ENCODE measurements at regions of chr1 and their contacts with region 1.

Region 1: DNA sequence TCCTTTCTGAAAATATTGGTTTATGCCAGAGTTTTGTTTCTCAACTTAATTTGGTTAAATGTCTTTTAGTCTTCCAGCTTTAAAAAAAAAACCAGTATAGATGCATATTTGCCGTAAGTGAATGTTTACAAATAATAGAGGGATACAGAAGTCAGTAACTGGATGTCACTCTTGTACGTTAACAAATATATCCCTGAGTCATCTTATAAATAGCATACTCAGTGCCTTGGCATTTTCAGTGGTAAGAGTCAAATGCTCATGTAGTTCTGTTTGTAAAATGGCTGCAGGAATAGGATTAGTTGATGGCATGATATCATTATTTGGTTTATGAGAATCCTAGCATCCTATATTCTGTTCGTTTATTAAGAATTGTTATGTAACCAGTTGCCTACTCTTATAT is 55.4 kb downstream of the SPEN start:
- DNase-seq: no peak
- ATAC-seq: peak in 4 of 8 donors; percentile 53 to 75 (median 66)
- H3K4me3 ChIP-seq: no peak overlapping the region
- H3K27ac ChIP-seq: peak overlapping the region in 7 of 10 donors; percentile 1 to 52 (median 18)
- H3K4me1 ChIP-seq: peaks cover 0 to 43% (median 22%) of the 10 kb centered on the region in 9 donors
- H3K27me3 ChIP-seq: no peaks in the 10 kb centered on the region
- CTCF ChIP-seq: no peak

Region 2: DNA sequence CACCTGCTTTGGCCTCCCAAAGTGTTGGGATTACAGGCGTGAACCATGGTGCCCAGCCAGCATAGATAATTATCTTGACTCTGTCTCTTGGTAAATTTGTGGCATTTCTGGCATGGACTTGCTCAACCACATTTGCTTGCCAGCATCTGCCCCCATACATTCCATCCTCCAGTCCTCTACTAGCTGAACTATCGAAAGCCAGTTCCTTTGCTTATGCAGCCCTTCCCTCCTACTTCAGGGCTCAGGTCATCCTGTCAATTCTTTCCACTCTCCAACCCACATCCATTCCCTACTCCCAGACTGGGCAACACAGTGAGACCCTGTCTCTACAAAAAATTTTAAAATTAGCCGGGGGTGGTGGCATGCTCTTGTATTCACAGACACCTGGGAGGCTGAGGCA is 82.4 kb before region 1 on chr1:
- intact Hi-C with region 1: loop called in 1 of 10 experiments (anchors 5 kb)
- DNase-seq: no peak
- ATAC-seq: no peak
- H3K4me3 ChIP-seq: no peak overlapping the region
- H3K27ac ChIP-seq: no peak overlapping the region
- H3K4me1 ChIP-seq: peaks cover 0 to 12% (median 5%) of the 10 kb centered on the region in 9 donors
- H3K27me3 ChIP-seq: no peaks in the 10 kb centered on the region
- CTCF ChIP-seq: no peak

Region 3: DNA sequence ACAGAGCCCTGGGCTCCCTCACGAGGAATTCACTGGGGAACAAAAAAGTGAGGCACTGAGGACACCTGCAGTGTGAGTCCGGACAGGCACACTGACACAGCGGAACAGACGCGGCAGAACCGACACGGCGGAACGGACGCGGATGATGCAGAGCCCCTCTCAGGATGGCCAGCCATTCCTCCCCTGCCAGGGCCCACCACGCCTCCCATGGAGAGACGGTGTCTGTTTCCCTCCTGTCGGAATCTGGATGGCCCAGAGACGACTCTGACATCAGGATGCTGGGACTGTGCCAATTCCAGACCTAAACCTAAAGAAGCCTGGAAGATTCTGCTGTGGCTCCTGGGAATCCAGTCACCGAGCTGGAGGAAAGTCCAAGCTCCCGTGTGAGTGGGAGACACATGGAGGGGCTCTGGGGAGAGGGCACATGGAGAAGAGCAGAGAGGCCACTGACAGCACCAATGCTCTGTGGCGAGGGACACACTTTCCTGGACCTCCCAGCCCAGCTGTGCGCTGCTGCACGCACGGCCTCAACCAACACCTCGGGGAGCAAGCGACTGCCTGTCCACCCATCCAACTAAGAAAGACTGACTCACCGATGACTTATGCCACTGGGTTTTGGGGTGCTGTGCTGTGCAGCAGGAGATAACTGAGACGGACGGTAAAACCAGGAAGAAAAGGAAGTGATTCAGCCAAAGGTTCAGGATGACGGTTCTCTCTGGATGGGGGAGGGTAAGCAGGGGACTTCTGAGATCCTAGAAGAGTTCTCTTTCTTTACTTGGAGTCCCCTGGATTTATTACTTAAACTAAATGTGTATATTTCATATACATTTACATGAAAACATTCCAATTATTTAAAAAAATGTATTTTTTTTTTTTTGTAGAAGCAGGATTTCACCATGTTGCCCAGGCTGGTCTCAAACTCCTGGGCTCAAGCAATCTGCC is 49.7 kb after region 1 on chr1:
- intact Hi-C with region 1: no loop called
- DNase-seq: no peak
- ATAC-seq: no peak
- H3K4me3 ChIP-seq: no peak overlapping the region
- H3K27ac ChIP-seq: peak overlapping the region in 3 of 10 donors; percentile 7 to 94 (median 38)
- H3K4me1 ChIP-seq: peaks cover 43 to 92% (median 81%) of the 10 kb centered on the region in 9 donors
- H3K27me3 ChIP-seq: no peaks in the 10 kb centered on the region
- CTCF ChIP-seq: no peak

Region 4: GRCh38 chr1:15966081-15966955 is 63.4 kb after region 1 on chr1:
- intact Hi-C with region 1: loop called in 1 of 10 experiments (anchors 10 kb)
- DNase-seq: no peak
- ATAC-seq: peak; percentile 21 to 64 (median 46)
- H3K4me3 ChIP-seq: no peak overlapping the region
- H3K27ac ChIP-seq: peak overlapping the region in 8 of 10 donors; percentile 32 to 83 (median 48)
- H3K4me1 ChIP-seq: peaks cover 11 to 51% (median 26%) of the 10 kb centered on the region in 9 donors
- H3K27me3 ChIP-seq: no peaks in the 10 kb centered on the region
- CTCF ChIP-seq: no peak

Measured in heart right ventricle (tissue), 16 donors.